ENCODE measurements at regions of chr10 and their contacts with region 1.

Region 1: DNA sequence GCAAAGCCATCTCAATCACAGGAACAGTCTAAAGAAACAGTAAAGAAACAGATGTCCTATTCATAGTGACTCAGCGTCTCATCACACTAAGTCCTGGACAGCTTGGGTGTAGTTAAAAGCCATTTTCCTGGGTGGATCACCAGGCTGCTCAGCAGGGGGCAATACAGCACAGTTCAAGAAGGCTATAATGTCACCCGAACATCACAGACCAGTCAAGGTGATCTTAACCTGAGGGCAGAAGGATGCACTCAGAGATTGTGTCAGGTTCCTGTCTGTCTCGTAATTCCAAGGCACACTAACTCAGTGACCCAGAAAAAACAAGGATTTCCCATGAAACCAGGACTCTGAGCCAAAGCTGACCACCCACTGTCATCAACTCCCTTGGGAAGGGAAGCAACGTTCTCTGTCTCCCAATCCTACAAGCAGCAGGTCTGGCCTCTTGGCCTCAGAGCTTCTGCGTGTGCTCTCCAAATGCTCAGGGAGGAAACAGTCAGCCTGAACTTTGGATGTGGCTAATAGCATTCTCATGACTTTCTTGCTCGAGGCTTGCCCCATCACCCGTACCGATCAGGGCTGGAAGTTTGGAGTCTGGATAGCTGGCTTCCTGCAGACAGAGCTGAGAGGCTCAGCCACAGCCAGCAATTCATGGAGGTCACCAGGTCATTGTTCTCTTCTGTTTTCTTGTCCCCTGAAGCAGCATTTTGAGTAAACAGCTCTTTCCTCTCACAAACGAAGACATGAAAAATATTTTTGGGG is 90.4 kb upstream of the FAM171A1 start:
- DNase-seq: peak; percentile 27
- H3K4me3 Mint-ChIP-seq: no peak overlapping the region
- H3K27ac Mint-ChIP-seq: no peak overlapping the region
- H3K4me1 Mint-ChIP-seq: no peaks in the 10 kb centered on the region
- H3K27me3 Mint-ChIP-seq: peaks cover 53% of the 10 kb centered on the region
- CTCF ChIP-seq: no peak

Region 2: DNA sequence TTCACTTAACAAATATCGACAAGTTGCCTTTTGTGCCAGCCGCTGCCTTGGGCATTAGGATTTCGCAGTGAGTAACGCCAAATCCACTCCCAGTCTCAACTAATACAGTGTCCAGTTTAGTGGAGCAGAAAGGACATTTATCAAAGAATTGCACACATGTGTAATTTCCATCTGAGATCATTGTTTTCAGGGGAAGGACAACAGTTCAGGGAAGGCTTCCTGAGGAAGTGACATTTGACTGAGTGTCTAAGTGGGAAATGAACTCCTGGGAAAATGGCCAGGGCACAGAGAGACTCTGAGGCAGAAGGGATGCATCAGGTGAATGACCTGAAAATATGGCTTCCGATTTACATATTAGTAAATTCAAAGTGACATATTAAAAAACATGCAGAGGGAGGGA is 168.8 kb after region 1 on chr10:
- CTCF ChIA-PET with region 1: no interaction called
- intact Hi-C with region 1: no loop called
- DNase-seq: no peak
- H3K4me3 Mint-ChIP-seq: no peak overlapping the region
- H3K27ac Mint-ChIP-seq: no peak overlapping the region
- H3K4me1 Mint-ChIP-seq: no peaks in the 10 kb centered on the region
- H3K27me3 Mint-ChIP-seq: peaks cover 52% of the 10 kb centered on the region
- CTCF ChIP-seq: no peak

Region 3: GRCh38 chr10:15719899-15720634 is 258.5 kb after region 1 on chr10 and contains the start of gene ITGA8:
- CTCF ChIA-PET with region 1: no interaction called
- intact Hi-C with region 1: loop called (anchors 10 kb)
- DNase-seq: no peak
- H3K4me3 Mint-ChIP-seq: no peak within 1 kb of the TSS
- H3K27ac Mint-ChIP-seq: no peak within 1 kb of the TSS
- H3K4me1 Mint-ChIP-seq: no peaks in the 10 kb centered on the region
- H3K27me3 Mint-ChIP-seq: peaks cover 38% of the 10 kb centered on the region
- CTCF ChIP-seq: no peak
- total RNA-seq, gene ITGA8: not detected in 2 replicates